OCI-LY7 (cell line): ENCODE measurements at regions of chr9 and their contacts with region 1.

Region 1: GRCh38 chr9:129131300-129132145 is 20.3 kb downstream of the PTPA start:
- DNase-seq: peak; percentile 73
- H3K4me3 ChIP-seq: no peak overlapping the region
- H3K27ac ChIP-seq: no peak overlapping the region
- H3K4me1 ChIP-seq: no peaks in the 10 kb centered on the region
- CTCF ChIP-seq: peak; percentile 99

Region 2: GRCh38 chr9:129237195-129237611 is 105.7 kb after region 1 on chr9:
- CTCF ChIA-PET with region 1: interaction called, 10 read pairs
- POLR2A ChIA-PET with region 1: no interaction called
- intact Hi-C with region 1: no loop called
- DNase-seq: peak; percentile 41
- H3K4me3 ChIP-seq: peak overlapping the region; percentile 56
- H3K27ac ChIP-seq: peak overlapping the region; percentile 66
- H3K4me1 ChIP-seq: peaks cover 35% of the 10 kb centered on the region
- CTCF ChIP-seq: no peak

Region 3: GRCh38 chr9:129610473-129611301 is 479.2 kb after region 1 on chr9:
- CTCF ChIA-PET with region 1: no interaction called
- POLR2A ChIA-PET with region 1: no interaction called
- intact Hi-C with region 1: loop called (anchors 2 kb)
- DNase-seq: peak; percentile 80
- H3K4me3 ChIP-seq: peak overlapping the region; percentile 75
- H3K27ac ChIP-seq: no peak overlapping the region
- H3K4me1 ChIP-seq: peaks cover 25% of the 10 kb centered on the region
- CTCF ChIP-seq: peak; percentile 85